CD4-positive, alpha-beta T cell (primary cell): ENCODE measurements at regions of chr4 and their contacts with region 1.

Region 1: GRCh38 chr4:142372530-142373260 is 473.4 kb downstream of the INPP4B start:
- DNase-seq: no peak
- ATAC-seq: no peak
- H3K4me3 ChIP-seq: no peak overlapping the region
- H3K4me3 Mint-ChIP-seq: peak overlapping the region; percentile 32
- H3K27ac ChIP-seq: no peak overlapping the region
- H3K27ac Mint-ChIP-seq: peak overlapping the region; percentile 84
- H3K4me1 ChIP-seq: peaks cover 24% of the 10 kb centered on the region
- H3K4me1 Mint-ChIP-seq: peaks cover 90% of the 10 kb centered on the region
- H3K27me3 ChIP-seq: no peaks in the 10 kb centered on the region
- H3K27me3 Mint-ChIP-seq: no peaks in the 10 kb centered on the region
- CTCF ChIP-seq: no peak

Region 2: DNA sequence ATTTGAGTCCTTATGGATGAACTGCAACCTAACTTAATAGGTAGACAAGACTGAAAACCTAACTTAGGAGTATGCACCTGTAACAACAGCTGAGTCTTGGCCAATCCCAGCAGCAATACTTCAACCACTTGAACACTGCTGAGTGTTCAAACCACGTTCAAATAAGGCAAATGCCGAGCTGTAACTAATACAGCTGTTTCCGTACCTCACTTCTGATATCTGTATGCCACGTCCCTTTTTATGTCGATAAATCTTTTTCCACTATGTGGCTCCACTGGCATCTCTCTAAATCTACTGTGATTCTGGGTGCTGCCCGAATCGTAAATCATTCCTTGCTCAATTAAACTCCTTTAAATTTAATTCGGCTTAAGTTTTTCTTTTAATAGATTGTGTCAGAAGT is 13.8 kb after region 1 on chr4:
- CTCF ChIA-PET with region 1: interaction called, 5 read pairs
- POLR2A ChIA-PET with region 1: interaction called, 12 read pairs
- intact Hi-C with region 1: no loop called
- DNase-seq: peak in 1 of 14 experiments; percentile 44
- ATAC-seq: peak; percentile 69
- H3K4me3 ChIP-seq: peak overlapping the region; percentile 35
- H3K4me3 Mint-ChIP-seq: peak overlapping the region; percentile 76
- H3K27ac ChIP-seq: no peak overlapping the region
- H3K27ac Mint-ChIP-seq: peak overlapping the region; percentile 84
- H3K4me1 ChIP-seq: peaks cover 23% of the 10 kb centered on the region
- H3K4me1 Mint-ChIP-seq: peaks cover 85% of the 10 kb centered on the region
- H3K27me3 ChIP-seq: no peaks in the 10 kb centered on the region
- H3K27me3 Mint-ChIP-seq: no peaks in the 10 kb centered on the region
- CTCF ChIP-seq: no peak

Region 3: GRCh38 chr4:142474335-142475087 is 101.8 kb after region 1 on chr4:
- CTCF ChIA-PET with region 1: no interaction called
- POLR2A ChIA-PET with region 1: no interaction called
- intact Hi-C with region 1: no loop called
- DNase-seq: peak in 4 of 14 experiments; percentile 3 to 70 (median 28)
- ATAC-seq: peak; percentile 69
- H3K4me3 ChIP-seq: no peak overlapping the region
- H3K4me3 Mint-ChIP-seq: no peak overlapping the region
- H3K27ac ChIP-seq: no peak overlapping the region
- H3K27ac Mint-ChIP-seq: peak overlapping the region; percentile 78
- H3K4me1 ChIP-seq: peaks cover 19% of the 10 kb centered on the region
- H3K4me1 Mint-ChIP-seq: peaks cover 31% of the 10 kb centered on the region
- H3K27me3 ChIP-seq: no peaks in the 10 kb centered on the region
- H3K27me3 Mint-ChIP-seq: no peaks in the 10 kb centered on the region
- CTCF ChIP-seq: no peak

Region 4: GRCh38 chr4:142574306-142574705 is 201.6 kb after region 1 on chr4:
- CTCF ChIA-PET with region 1: no interaction called
- POLR2A ChIA-PET with region 1: no interaction called
- intact Hi-C with region 1: no loop called
- DNase-seq: peak in 1 of 14 experiments; percentile 36
- ATAC-seq: no peak
- H3K4me3 ChIP-seq: no peak overlapping the region
- H3K4me3 Mint-ChIP-seq: peak overlapping the region; percentile 16
- H3K27ac ChIP-seq: no peak overlapping the region
- H3K27ac Mint-ChIP-seq: peak overlapping the region; percentile 18
- H3K4me1 ChIP-seq: peaks cover 6% of the 10 kb centered on the region
- H3K4me1 Mint-ChIP-seq: peaks cover 82% of the 10 kb centered on the region
- H3K27me3 ChIP-seq: no peaks in the 10 kb centered on the region
- H3K27me3 Mint-ChIP-seq: no peaks in the 10 kb centered on the region
- CTCF ChIP-seq: no peak